ENCODE measurements at regions of chr5 and their contacts with region 1.

Region 1: DNA sequence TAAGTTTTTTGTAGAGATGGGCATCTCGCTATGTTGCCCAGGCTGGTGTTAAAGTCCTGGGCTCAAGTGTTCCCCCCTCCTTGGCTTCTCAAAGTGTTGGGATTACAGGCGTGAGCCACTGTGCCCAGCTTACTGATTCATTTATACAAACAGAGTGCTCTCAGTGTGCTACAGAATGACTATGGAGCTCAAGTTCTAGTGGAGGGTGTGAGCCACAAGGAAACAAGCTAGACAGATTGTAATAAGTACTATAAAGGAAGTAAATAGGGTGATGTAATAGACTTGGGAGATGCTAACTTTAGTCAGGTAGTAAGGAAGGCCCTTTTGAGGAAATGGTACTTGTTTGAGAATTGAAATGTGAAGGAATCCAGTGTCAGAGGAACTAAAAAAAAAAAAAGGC is 1.7 kb upstream of the TMEM267 start:
- DNase-seq: no peak
- H3K4me3 ChIP-seq: no peak overlapping the region
- CTCF ChIP-seq: no peak

Region 2: GRCh38 chr5:43409809-43410271 is 75.6 kb before region 1 on chr5:
- in situ Hi-C with region 1: loop called (anchors 5 kb)
- DNase-seq: no peak
- H3K4me3 ChIP-seq: no peak overlapping the region
- CTCF ChIP-seq: no peak

Region 3: GRCh38 chr5:43536972-43537371 is 51.6 kb after region 1 on chr5:
- in situ Hi-C with region 1: loop called (anchors 5 kb)
- DNase-seq: no peak
- H3K4me3 ChIP-seq: no peak overlapping the region
- CTCF ChIP-seq: no peak

Measured in astrocyte of the cerebellum (primary cell).